ENCODE measurements at regions of chr11 and their contacts with region 1.

Region 1: DNA sequence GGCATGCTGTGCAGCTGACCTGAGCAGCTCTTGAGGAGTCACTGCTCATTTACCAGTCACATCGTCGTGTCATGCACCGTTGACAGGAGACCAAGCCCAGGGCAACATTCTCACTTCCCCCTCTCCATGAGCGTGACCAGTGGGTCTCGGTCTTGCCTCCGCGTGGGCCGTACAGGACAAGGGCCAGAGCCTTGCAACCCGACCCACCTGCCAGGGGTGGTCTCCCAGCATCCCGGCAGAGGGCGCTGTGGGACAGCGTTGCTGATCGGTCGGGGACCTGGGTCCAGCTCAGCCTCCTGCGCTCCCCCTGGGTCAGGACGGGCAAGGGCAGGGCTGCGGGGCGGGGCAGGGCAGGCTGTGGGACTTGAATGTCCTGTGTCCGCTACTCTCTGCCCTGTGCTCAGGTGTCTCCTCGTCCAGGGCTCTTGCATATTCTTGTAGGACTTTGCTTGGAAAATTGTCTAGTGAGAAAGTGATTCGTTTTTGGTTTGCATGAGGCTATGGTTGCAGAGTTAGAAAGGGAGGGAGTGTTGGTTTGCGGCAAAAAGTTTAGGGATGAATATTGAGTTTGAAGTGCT is 16.2 kb downstream of the EIF4G2 start:
- DNase-seq: peak; percentile 85 to 86
- ATAC-seq: peak; percentile 83 to 94
- H3K4me3 ChIP-seq: no peak overlapping the region
- H3K27ac ChIP-seq: peak overlapping the region; percentile 16 to 68; a peak in 4 of 6 replicates
- H3K4me1 ChIP-seq: peaks cover 16% of the 10 kb centered on the region
- CTCF ChIP-seq: peak; percentile 90
- EP300 ChIP-seq: no peak
- POLR2A ChIP-seq: no peak
- RAD21 ChIP-seq: peak; percentile 97 to 98

Region 2: DNA sequence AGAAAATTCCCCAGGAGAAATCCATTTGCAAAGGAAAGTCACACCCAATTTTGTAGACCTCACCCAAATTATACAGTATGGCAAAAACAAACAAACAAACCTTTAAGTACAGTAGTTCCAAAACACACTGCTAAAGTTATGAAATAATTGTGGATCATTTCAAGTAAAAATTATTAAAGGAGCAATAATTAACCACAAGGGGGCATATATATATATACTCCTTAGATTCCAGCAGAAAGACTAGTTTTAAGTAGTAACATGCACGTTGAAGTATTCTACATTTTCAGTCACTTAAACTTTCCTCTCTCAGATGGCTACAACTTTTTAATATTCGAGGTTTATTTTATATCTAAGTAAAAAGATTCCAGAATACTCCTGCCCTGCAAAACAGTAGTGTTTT is 278.3 kb before region 1 on chr11:
- CTCF ChIA-PET with region 1: no interaction called
- POLR2A ChIA-PET with region 1: no interaction called
- DNase-seq: peak in 1 of 2 experiments; percentile 12
- ATAC-seq: no peak
- H3K4me3 ChIP-seq: no peak overlapping the region
- H3K27ac ChIP-seq: no peak overlapping the region
- H3K4me1 ChIP-seq: peaks cover 11% of the 10 kb centered on the region
- CTCF ChIP-seq: peak; percentile 51
- EP300 ChIP-seq: no peak
- POLR2A ChIP-seq: no peak
- RAD21 ChIP-seq: peak; percentile 40 to 66; a peak in 4 of 5 replicates

Region 3: GRCh38 chr11:10716127-10716526 is 76.4 kb before region 1 on chr11:
- CTCF ChIA-PET with region 1: no interaction called
- POLR2A ChIA-PET with region 1: no interaction called
- DNase-seq: no peak
- ATAC-seq: no peak
- H3K4me3 ChIP-seq: no peak overlapping the region
- H3K27ac ChIP-seq: no peak overlapping the region
- H3K4me1 ChIP-seq: no peaks in the 10 kb centered on the region
- CTCF ChIP-seq: no peak
- EP300 ChIP-seq: no peak
- POLR2A ChIP-seq: no peak
- RAD21 ChIP-seq: no peak

Region 4: GRCh38 chr11:10770626-10771254 is 21.7 kb before region 1 on chr11:
- CTCF ChIA-PET with region 1: interaction called, 58 read pairs
- POLR2A ChIA-PET with region 1: no interaction called
- DNase-seq: peak; percentile 60 to 72
- ATAC-seq: peak; percentile 73 to 85; a peak in 4 of 6 replicates
- H3K4me3 ChIP-seq: no peak overlapping the region
- H3K27ac ChIP-seq: no peak overlapping the region
- H3K4me1 ChIP-seq: no peaks in the 10 kb centered on the region
- CTCF ChIP-seq: peak; percentile 87
- EP300 ChIP-seq: no peak
- POLR2A ChIP-seq: no peak
- RAD21 ChIP-seq: peak; percentile 63 to 68

Region 5: GRCh38 chr11:10838083-10838482 is 45.6 kb after region 1 on chr11:
- CTCF ChIA-PET with region 1: interaction called, 11 read pairs
- POLR2A ChIA-PET with region 1: no interaction called
- DNase-seq: no peak
- ATAC-seq: no peak
- H3K4me3 ChIP-seq: no peak overlapping the region
- H3K27ac ChIP-seq: no peak overlapping the region
- H3K4me1 ChIP-seq: no peaks in the 10 kb centered on the region
- CTCF ChIP-seq: no peak
- EP300 ChIP-seq: no peak
- POLR2A ChIP-seq: no peak
- RAD21 ChIP-seq: no peak

Region 6: DNA sequence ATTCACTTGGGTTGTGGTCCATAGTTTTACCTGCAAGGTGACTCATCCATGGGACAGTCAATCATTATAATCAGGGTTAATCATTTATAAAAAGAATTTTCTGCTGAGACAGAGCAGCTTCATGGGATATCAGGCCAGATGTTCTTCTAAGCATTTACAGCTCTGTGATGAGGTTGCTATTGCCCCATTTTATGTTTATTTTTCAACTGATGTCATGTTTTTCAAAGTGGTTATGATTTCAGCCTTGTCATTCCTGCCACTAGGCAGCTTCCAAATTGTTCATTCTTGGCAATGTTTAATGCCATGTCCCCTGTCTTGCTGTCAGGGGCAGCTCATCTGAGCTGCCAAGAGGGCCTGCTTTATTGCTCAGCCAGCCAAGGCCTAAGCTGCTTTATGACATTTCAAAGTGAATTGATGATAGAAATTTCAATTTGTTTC is 101.2 kb after region 1 on chr11:
- CTCF ChIA-PET with region 1: interaction called, 25 read pairs
- POLR2A ChIA-PET with region 1: no interaction called
- DNase-seq: peak; percentile 18 to 90
- ATAC-seq: peak; percentile 90 to 95
- H3K4me3 ChIP-seq: no peak overlapping the region
- H3K27ac ChIP-seq: peak overlapping the region; percentile 76 to 93
- H3K4me1 ChIP-seq: peaks cover 53% of the 10 kb centered on the region
- CTCF ChIP-seq: no peak; the same call in 2 of the 3 replicates
- EP300 ChIP-seq: peak; percentile 76 to 88; a peak in 3 of 5 replicates
- POLR2A ChIP-seq: no peak
- RAD21 ChIP-seq: peak in 1 of 2 experiments; percentile 54; a peak in 2 of 5 replicates

Region 7: GRCh38 chr11:10920205-10920604 is 127.7 kb after region 1 on chr11:
- CTCF ChIA-PET with region 1: interaction called, 35 read pairs
- POLR2A ChIA-PET with region 1: no interaction called
- DNase-seq: no peak
- ATAC-seq: no peak
- H3K4me3 ChIP-seq: no peak overlapping the region
- H3K27ac ChIP-seq: peak overlapping the region in 1 of 2 experiments; percentile 33; a peak in 1 of 6 replicates
- H3K4me1 ChIP-seq: peaks cover 10% of the 10 kb centered on the region
- CTCF ChIP-seq: no peak
- EP300 ChIP-seq: no peak
- POLR2A ChIP-seq: no peak
- RAD21 ChIP-seq: no peak

Region 8: GRCh38 chr11:10943968-10944367 is 151.5 kb after region 1 on chr11:
- CTCF ChIA-PET with region 1: interaction called, 78 read pairs
- POLR2A ChIA-PET with region 1: no interaction called
- DNase-seq: no peak
- ATAC-seq: peak; percentile 39 to 49; a peak in 2 of 6 replicates
- H3K4me3 ChIP-seq: no peak overlapping the region
- H3K27ac ChIP-seq: peak overlapping the region in 1 of 2 experiments; percentile 13; a peak in 1 of 6 replicates
- H3K4me1 ChIP-seq: peaks cover 9% of the 10 kb centered on the region; the same call in 2 of the 3 replicates
- CTCF ChIP-seq: no peak
- EP300 ChIP-seq: no peak
- POLR2A ChIP-seq: no peak
- RAD21 ChIP-seq: no peak

Region 9: DNA sequence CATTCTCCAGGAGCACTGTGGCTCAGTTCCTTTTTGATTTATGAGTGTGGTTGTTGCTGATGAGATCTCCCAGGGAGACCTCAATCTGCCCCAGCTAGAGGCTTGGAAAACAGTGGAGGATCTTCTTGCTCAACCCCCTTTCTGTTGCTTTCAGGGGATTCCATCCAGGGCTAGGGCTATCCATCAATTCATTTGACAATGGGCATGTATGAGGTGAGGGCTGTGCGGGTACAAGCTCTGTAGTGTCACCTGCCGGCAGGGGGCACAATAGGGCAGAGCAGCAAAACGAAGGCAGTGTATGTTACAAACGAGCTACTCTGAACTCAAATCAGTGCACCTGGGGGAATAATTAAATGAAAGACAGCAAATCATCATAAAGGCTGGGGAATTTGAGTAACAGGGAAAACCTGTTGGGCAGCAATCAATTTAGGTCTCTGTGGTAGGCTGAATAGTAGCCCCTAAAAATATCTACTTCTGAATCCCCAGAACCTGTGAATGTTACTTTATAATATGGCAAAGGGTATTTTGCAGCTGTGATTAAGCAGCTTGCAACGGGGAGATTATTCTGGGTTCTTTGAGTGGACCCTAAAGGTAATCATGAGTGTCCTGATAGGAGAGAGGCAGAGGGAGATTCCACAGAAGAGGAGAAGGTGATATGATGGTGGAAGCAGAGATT is 235.7 kb after region 1 on chr11:
- CTCF ChIA-PET with region 1: interaction called, 39 read pairs
- POLR2A ChIA-PET with region 1: no interaction called
- DNase-seq: peak; percentile 44 to 65
- ATAC-seq: peak; percentile 90 to 97
- H3K4me3 ChIP-seq: no peak overlapping the region
- H3K27ac ChIP-seq: no peak overlapping the region
- H3K4me1 ChIP-seq: peaks cover 13% of the 10 kb centered on the region; the same call in 2 of the 3 replicates
- CTCF ChIP-seq: peak; percentile 85
- EP300 ChIP-seq: no peak
- POLR2A ChIP-seq: no peak
- RAD21 ChIP-seq: peak; percentile 82 to 90

Measured in A549 (cell line).